Sciatic nerve (tissue), 2 donors: ENCODE measurements at regions of chr18 and their contacts with region 1.

Region 1: DNA sequence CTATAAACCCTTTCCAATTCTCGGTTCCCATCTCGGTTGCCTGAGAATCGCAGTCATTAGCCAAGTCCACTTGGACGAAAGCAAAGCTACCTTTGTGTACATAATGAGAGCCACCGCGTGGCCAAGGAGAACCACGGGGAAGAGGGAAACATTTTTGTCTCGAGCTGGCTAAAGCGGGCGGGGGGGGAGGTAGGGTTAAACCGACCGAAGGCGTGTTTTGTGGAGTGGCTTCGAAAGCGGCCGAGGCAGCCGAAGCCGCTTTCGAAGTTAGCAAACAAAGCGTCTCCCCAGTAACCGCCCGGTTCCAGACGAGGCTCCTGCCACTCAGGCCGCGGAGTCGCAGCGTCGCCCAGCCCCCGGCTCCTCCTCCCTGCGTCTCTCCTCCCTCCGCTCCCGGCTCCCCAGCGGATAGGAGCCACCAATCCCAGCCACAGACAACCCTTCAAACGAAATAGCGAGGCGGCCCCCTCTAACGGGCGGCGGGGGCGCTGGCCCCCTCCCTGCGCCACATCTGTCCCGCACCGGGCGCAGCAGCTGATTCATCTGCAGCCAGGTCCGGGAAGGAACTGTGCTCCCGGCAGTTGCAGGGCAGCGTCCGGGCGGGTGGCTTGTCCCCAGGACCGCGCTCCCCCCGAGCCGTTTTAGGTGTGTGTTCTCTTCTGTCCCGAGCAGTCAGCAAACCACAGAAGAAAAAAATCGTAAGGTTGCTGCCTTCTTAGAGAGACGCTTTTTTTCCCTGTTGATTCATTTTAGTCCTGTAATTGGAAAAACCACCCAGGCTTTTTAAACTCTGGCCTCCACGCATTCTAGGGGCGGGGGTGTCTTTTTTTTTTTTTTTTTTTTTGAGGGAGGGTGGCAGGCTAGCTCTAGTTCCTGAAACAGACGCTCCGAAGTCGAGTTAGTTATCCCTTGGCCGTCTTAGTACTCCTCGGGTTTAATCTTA is 1.8 kb upstream of the TGIF1 start:
- DNase-seq: peak; percentile 96
- ATAC-seq: peak; percentile 86

Region 2: DNA sequence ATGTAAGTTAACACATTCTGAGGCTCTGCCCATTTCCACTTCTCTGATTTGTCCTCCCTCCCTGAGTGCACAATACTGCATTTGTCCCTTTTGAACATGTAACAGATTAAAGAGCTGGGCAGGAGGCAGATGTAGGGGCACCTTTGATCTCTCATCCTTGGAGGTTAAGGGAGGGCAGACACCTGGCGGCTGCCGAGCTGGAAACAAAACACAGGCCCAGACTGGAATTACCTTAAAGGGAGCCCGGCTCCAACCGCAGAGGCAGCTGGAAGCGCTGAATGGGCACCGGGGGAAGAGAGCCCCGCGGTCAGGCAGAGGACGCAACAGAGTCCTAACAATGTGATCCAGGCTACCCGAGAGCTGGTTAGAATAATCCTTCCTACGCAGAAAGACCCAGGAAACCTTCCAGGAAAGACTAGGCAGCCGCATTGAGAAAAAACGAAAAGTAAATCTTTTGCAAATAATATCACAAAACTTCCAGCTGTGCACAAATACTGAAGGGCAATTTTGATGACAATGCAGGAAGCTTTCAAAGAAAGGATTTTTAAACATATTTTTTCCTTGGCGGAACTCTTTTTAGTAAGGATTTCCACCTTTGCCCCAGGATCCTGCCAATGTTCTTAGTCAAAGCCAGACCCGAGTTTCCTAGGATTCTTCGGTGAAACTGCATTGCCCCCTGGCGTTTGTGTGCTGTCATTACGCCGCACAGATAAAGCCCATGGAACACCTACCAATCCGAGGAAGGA is 217.8 kb after region 1 on chr18:
- intact Hi-C with region 1: loop called (anchors 10 kb)
- DNase-seq: peak; percentile 90
- ATAC-seq: peak; percentile 94